HCT116 (cell line): ENCODE measurements at regions of chr2 and their contacts with region 1.

Region 1: GRCh38 chr2:667332-667999 is 9.7 kb downstream of the TMEM18 start:
- DNase-seq: peak; percentile 22
- ATAC-seq: peak; percentile 80
- H3K4me3 ChIP-seq: no peak overlapping the region
- H3K27ac ChIP-seq: no peak overlapping the region
- H3K4me1 ChIP-seq: no peaks in the 10 kb centered on the region
- H3K27me3 ChIP-seq: no peaks in the 10 kb centered on the region
- CTCF ChIP-seq: peak; percentile 31 to 62 (median 60); a peak in 5 of 6 replicates
- POLR2A ChIP-seq: no peak
- RAD21 ChIP-seq: peak; percentile 54

Region 2: GRCh38 chr2:529425-529824 is 138.0 kb before region 1 on chr2:
- CTCF ChIA-PET with region 1: interaction called, 5 read pairs
- POLR2A ChIA-PET with region 1: no interaction called
- RAD21 ChIA-PET with region 1: no interaction called
- intact Hi-C with region 1: loop called (anchors 2 kb)
- DNase-seq: peak; percentile 74
- ATAC-seq: peak; percentile 98
- H3K4me3 ChIP-seq: no peak overlapping the region
- H3K27ac ChIP-seq: no peak overlapping the region
- H3K4me1 ChIP-seq: 0 out of 4 replicates have a peak, but pooled peaks cover 2 to 4% of the 10 kb centered on the region in 2 experiments
- H3K27me3 ChIP-seq: no peaks in the 10 kb centered on the region
- CTCF ChIP-seq: peak; percentile 49 to 92 (median 54)
- POLR2A ChIP-seq: no peak
- RAD21 ChIP-seq: peak; percentile 86

Region 3: DNA sequence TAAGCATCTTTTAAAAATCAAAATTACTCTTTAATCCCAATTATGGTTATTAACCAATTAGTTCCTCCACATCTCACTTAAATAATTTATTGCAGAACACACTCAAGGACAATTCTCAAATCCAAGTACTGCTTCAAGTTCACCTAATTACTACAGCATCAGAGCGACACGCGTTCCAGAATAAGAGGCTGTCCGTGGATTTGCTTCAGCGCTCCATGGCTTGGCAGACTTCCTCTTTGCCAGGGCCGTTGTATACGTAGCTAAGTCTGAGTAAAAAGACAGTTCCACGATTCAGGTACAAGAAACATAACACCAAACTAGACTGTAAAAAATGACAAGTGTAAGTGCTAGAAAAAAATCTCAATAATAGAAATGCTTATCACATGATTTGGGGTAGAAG is 1816.8 kb after region 1 on chr2:
- CTCF ChIA-PET with region 1: no interaction called
- POLR2A ChIA-PET with region 1: no interaction called
- RAD21 ChIA-PET with region 1: no interaction called
- intact Hi-C with region 1: no loop called
- DNase-seq: no peak
- ATAC-seq: no peak
- H3K4me3 ChIP-seq: no peak overlapping the region
- H3K27ac ChIP-seq: no peak overlapping the region
- H3K4me1 ChIP-seq: no peaks in the 10 kb centered on the region
- H3K27me3 ChIP-seq: no peaks in the 10 kb centered on the region
- CTCF ChIP-seq: no peak
- POLR2A ChIP-seq: no peak
- RAD21 ChIP-seq: no peak